ENCODE measurements at regions of chr4 and their contacts with region 1.

Region 1: GRCh38 chr4:129641179-129641578 is 545.2 kb downstream of the C4orf33 start:
- DNase-seq: peak in 22 of 35 experiments; percentile 1 to 42 (median 15)
- ATAC-seq: no peak
- H3K4me3 ChIP-seq: no peak overlapping the region
- H3K4me3 Mint-ChIP-seq: no peak overlapping the region
- H3K27ac ChIP-seq: no peak overlapping the region
- H3K27ac Mint-ChIP-seq: no peak overlapping the region
- H3K4me1 ChIP-seq: no peaks in the 10 kb centered on the region
- H3K4me1 Mint-ChIP-seq: no peaks in the 10 kb centered on the region
- H3K27me3 ChIP-seq: no peaks in the 10 kb centered on the region
- H3K27me3 Mint-ChIP-seq: no peaks in the 10 kb centered on the region

Region 2: DNA sequence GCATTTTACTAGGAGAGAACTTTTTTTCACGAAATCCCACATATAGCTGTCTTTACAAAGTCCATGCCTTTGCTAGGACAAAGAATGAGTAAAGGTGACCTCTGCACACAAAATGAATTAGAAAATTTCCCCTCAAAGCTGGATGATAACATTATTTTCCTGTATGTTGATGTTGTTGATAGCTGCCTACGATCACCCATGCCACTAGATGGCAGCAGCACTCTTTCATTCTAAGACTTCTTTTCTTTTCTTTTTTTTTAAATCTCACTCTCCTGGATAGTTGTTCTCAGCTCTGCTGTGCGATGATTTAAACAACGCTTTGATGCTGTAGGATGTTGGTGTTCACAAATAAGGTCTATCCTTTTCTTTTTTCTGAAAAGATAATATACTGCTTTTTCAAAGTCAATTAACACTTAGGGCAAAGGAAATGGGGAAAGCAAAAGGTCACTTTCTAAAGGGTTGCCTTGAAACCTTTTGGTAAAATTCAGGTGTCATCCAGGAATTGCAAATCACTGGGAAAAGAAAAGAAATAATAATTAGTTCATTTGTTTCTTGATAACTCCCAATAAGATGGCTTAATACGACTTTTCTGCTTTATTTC is 278.4 kb before region 1 on chr4:
- CTCF ChIA-PET with region 1: interaction called, 4 to 11 read pairs
- POLR2A ChIA-PET with region 1: no interaction called
- DNase-seq: peak in 26 of 35 experiments; percentile 2 to 69 (median 26)
- ATAC-seq: no peak
- H3K4me3 ChIP-seq: no peak overlapping the region
- H3K4me3 Mint-ChIP-seq: no peak overlapping the region
- H3K27ac ChIP-seq: no peak overlapping the region
- H3K27ac Mint-ChIP-seq: no peak overlapping the region
- H3K4me1 ChIP-seq: no peaks in the 10 kb centered on the region
- H3K4me1 Mint-ChIP-seq: peaks cover 0 to 6% (median 1%) of the 10 kb centered on the region in 3 donors
- H3K27me3 ChIP-seq: no peaks in the 10 kb centered on the region
- H3K27me3 Mint-ChIP-seq: peaks cover 11 to 12% of the 10 kb centered on the region in 2 donors

Region 3: GRCh38 chr4:129916991-129917390 is 275.8 kb after region 1 on chr4:
- CTCF ChIA-PET with region 1: no interaction called
- POLR2A ChIA-PET with region 1: no interaction called
- DNase-seq: no peak
- ATAC-seq: no peak
- H3K4me3 ChIP-seq: no peak overlapping the region
- H3K4me3 Mint-ChIP-seq: no peak overlapping the region
- H3K27ac ChIP-seq: no peak overlapping the region
- H3K27ac Mint-ChIP-seq: no peak overlapping the region
- H3K4me1 ChIP-seq: no peaks in the 10 kb centered on the region
- H3K4me1 Mint-ChIP-seq: no peaks in the 10 kb centered on the region
- H3K27me3 ChIP-seq: no peaks in the 10 kb centered on the region
- H3K27me3 Mint-ChIP-seq: no peaks in the 10 kb centered on the region